ENCODE measurements at regions of chr7 and their contacts with region 1.

Region 1: DNA sequence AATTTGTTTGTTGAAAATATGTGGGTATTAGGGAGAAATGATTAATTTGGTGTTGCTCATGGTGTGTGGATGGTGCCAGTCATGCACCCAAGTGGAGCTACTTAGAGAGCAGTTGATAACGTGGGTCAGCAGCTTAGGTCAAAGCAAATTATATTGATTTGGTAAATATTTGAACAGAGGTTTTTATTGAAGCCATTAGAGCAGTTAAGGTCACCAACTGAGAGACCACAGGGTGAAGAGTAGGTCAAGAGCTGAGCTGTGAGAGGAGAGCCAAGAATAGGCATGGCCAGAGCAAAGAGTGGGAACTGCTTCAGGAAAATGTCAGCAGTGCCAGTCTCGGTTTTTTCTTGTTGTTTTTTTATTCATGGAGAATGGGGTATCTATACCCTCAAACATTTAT is 97.9 kb downstream of the TMEM168 start:
- DNase-seq: no peak
- H3K4me3 ChIP-seq: no peak overlapping the region
- H3K27ac ChIP-seq: no peak overlapping the region
- H3K4me1 ChIP-seq: no peaks in the 10 kb centered on the region
- H3K27me3 ChIP-seq: no peaks in the 10 kb centered on the region
- CTCF ChIP-seq: no peak
- POLR2A ChIP-seq: no peak

Region 2: GRCh38 chr7:112739436-112740190 is 47.3 kb after region 1 on chr7:
- intact Hi-C with region 1: loop called (anchors 5 kb)
- DNase-seq: no peak
- H3K4me3 ChIP-seq: no peak overlapping the region
- H3K27ac ChIP-seq: no peak overlapping the region
- H3K4me1 ChIP-seq: no peaks in the 10 kb centered on the region
- H3K27me3 ChIP-seq: no peaks in the 10 kb centered on the region
- CTCF ChIP-seq: no peak
- POLR2A ChIP-seq: no peak

Region 3: GRCh38 chr7:112782494-112782893 is 90.2 kb after region 1 on chr7:
- intact Hi-C with region 1: no loop called
- DNase-seq: no peak
- H3K4me3 ChIP-seq: no peak overlapping the region
- H3K27ac ChIP-seq: no peak overlapping the region
- H3K4me1 ChIP-seq: no peaks in the 10 kb centered on the region
- H3K27me3 ChIP-seq: no peaks in the 10 kb centered on the region
- CTCF ChIP-seq: no peak
- POLR2A ChIP-seq: no peak

Measured in thyroid gland (tissue), 4 donors.